Breast epithelium (tissue), 4 donors: ENCODE measurements at regions of chr1 and their contacts with region 1.

Region 1: GRCh38 chr1:38420666-38421065 is 374.1 kb upstream of the POU3F1 start:
- DNase-seq: no peak
- H3K4me3 ChIP-seq: no peak overlapping the region
- H3K27ac ChIP-seq: no peak overlapping the region
- H3K4me1 ChIP-seq: no peaks in the 10 kb centered on the region
- H3K27me3 ChIP-seq: no peaks in the 10 kb centered on the region
- CTCF ChIP-seq: no peak
- POLR2A ChIP-seq: no peak

Region 2: DNA sequence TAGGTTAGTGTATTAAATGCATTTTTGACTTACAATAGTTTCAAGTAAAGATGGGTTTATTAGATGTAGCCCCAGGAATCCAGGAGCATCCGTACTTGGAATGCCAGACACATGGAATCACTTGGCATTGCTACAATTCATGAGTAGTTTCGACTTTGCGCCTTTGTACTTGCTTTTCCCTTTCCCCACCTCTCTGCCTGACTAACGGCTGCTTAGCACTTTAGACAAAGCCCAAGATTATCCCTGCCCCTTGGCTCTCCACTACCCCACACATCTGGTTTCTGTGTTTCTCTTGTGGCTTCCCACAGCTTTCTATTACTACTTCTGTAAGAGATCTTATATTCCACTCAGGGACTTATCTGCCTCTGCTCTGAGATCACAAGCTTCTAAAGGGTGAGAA is 23.6 kb after region 1 on chr1:
- intact Hi-C with region 1: no loop called
- DNase-seq: no peak
- H3K4me3 ChIP-seq: no peak overlapping the region
- H3K27ac ChIP-seq: no peak overlapping the region
- H3K4me1 ChIP-seq: no peaks in the 10 kb centered on the region
- H3K27me3 ChIP-seq: no peaks in the 10 kb centered on the region
- CTCF ChIP-seq: no peak
- POLR2A ChIP-seq: no peak

Region 3: DNA sequence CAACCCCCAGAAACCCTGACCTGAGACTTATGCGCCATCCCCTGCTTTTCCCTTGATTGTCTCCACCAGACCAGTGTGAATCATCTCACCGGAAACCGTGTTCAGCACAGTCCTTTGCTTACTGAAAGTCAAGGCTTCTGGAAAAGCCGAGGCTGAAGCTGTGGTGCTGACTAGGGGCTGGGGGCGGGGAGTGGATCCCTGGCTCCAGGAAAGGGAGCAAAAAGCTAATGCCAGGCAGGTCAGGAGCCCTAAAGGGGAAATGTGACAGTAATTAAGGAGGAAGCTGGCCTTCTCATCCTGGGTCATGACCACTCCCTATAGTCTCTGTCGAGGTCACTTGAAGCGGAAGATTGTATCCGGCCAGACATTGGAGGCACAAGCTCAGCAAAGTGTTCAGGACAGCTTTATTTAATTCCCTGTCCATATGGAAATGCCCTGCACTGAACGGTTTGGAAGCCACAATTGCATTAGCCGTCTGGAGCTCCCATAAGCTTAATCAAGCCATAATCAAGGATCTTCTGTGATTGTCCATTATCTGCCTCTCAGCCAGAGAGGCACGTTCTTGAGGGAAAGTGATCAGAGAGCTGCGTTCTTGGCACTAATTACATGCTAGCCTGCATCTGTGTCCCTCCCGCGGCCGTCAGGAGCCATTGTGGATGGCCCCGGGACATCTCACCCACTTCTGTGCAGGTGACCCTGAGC is 35.3 kb after region 1 on chr1:
- intact Hi-C with region 1: loop called (anchors 5 kb)
- DNase-seq: no peak
- H3K4me3 ChIP-seq: no peak overlapping the region
- H3K27ac ChIP-seq: no peak overlapping the region
- H3K4me1 ChIP-seq: no peaks in the 10 kb centered on the region
- H3K27me3 ChIP-seq: no peaks in the 10 kb centered on the region
- CTCF ChIP-seq: no peak
- POLR2A ChIP-seq: no peak